HEK293T (cell line): ENCODE measurements at regions of chr3 and their contacts with region 1.

Region 1: DNA sequence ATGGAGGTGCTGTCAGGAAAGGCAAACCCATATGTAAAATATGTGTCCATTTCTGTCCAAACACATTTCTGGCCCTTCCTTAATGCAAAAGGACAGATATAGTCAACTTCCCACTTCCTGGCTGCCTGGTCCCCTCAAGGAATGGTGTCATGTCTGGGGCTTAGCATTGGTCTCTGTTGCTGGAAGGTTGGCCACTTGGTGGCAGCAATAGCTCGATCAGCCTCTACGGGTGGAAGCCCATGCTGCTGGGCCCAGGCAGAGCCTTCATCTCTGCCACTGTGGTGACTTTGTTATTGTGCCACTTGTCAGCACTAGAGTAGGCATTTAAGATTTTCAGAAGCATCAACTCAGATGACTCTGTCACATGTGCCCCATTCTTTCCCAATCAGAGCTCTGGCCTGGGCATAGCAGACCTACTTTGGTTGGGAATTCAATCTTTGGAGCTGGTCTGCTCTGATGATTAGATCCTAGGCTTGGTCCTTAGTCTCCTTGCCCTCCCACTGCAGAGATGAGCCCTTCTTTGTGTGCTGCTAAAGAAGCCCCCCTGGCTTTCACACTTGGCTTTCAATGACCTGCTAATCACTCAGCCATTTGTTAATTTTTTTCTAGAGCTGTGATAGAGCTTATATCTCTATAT is 51.0 kb upstream of the SPSB4 start:
- DNase-seq: peak; percentile 72

Region 2: DNA sequence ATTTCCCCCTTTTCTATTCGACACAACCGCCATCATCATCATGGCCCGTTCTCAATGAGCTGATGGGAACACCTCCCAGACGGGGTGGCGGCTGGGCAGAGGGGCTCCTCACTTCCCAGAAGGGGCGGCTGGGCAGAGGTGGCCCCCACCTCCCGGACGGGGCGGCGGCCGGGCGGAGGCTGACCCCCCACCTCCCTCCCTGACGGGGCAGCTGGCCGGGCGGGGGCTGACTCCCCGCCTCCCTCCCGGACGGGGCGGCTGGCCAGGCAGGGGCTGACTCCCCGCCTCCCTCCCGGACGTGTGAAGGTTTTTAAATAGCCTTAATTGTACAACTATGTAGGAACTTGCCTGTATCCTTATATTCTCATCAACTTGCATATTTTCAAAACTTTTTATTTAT is 30.2 kb after region 1 on chr3:
- CTCF ChIA-PET with region 1: no interaction called
- POLR2A ChIA-PET with region 1: no interaction called
- DNase-seq: no peak

Region 3: DNA sequence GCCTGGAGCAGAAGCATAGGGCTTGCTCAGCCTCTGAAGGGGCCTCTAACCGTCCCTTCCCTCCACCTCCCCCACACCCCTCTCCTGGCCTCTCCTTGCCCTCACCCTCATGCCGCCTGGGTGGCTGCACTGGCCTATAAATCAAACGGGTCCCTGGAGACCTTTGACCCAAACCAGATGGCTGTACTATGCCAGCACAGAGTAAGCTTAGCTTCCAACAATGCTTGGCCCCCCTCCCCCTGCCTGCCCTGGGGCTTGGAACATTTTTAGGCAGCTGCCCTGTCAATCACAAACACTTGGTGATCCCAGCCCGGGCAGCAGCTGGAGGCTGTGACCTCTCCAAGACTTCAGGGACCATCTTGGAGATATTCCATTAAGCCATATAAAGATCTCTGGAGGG is 84.1 kb after region 1 on chr3:
- CTCF ChIA-PET with region 1: no interaction called
- POLR2A ChIA-PET with region 1: no interaction called
- DNase-seq: no peak

Region 4: GRCh38 chr3:141151439-141151838 is 151.3 kb after region 1 on chr3:
- CTCF ChIA-PET with region 1: no interaction called
- POLR2A ChIA-PET with region 1: no interaction called
- DNase-seq: no peak

Region 5: DNA sequence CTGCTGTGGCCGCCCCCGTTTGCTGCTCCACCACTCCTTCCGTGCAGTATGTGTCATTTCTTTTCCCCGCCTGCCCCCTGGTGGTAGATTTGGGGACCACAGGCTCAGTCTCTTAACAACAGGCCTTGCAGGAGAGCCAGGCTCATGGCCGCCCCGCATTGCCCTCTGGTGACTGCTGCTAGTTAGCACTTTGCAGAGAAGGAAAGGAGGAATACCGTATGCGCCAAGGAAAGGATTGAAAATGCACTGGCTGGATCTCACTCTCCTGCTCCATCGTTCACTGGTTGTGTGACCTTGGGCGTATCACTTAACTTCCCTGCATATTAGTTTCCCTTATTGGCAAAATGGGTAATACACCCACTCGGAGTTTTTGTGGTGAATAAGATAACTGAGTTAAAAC is 192.2 kb after region 1 on chr3:
- CTCF ChIA-PET with region 1: interaction called, 15 read pairs
- POLR2A ChIA-PET with region 1: no interaction called
- DNase-seq: peak; percentile 87